Activated CD4-positive, alpha-beta T cell treated with anti-CD3 and anti-CD28 coated beads for 36 hours (primary cell): ENCODE measurements at regions of chrX and their contacts with region 1.

Region 1: GRCh38 chrX:136268051-136269048 is 17.1 kb upstream of the MAP7D3 start:
- DNase-seq: peak; percentile 59
- ATAC-seq: peak; percentile 68
- H3K4me3 Mint-ChIP-seq: no peak overlapping the region
- H3K27ac Mint-ChIP-seq: no peak overlapping the region
- H3K4me1 Mint-ChIP-seq: peaks cover 4% of the 10 kb centered on the region
- H3K27me3 Mint-ChIP-seq: no peaks in the 10 kb centered on the region

Region 2: GRCh38 chrX:136115126-136115903 is 153.0 kb before region 1 on chrX:
- CTCF ChIA-PET with region 1: no interaction called
- POLR2A ChIA-PET with region 1: no interaction called
- intact Hi-C with region 1: no loop called
- DNase-seq: no peak
- ATAC-seq: no peak
- H3K4me3 Mint-ChIP-seq: no peak overlapping the region
- H3K27ac Mint-ChIP-seq: no peak overlapping the region
- H3K4me1 Mint-ChIP-seq: no peaks in the 10 kb centered on the region
- H3K27me3 Mint-ChIP-seq: no peaks in the 10 kb centered on the region

Region 3: DNA sequence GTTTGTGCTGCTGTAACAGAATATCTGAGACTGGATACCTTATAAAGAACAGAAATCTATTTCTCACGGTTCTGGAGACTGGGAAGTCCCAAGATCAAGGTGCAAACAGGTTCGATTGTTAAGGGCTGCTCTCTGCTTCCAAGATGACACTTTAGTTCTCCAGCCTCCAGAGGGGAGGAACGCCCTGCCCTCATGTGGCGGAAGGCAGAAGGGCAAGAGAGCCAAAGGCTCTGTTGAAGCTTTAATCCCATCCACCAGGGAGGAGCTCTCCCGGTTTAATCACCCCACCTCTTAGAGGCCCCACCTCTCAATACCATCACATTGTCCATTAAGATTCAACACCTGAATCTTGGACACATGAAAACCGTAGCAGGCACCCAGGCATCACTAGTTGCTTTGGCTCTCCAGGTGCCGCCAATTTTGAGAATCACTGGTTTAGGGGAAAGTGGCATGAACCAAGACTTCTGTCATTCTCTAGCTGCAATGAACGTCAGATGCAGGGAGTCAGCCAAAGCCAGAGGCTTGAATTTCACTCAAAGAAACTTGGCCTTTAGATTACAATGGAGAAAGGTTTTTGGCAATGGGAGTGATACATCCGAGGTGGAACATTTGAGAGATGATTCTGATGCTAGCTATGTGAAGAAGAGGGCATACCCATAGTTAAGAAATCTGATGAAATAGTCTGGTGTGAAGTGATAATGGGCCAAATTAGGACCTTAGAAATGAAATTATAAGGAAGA is 105.3 kb before region 1 on chrX:
- CTCF ChIA-PET with region 1: interaction called, 14 read pairs
- POLR2A ChIA-PET with region 1: no interaction called
- intact Hi-C with region 1: loop called in 1 of 2 experiments (anchors 1 kb)
- DNase-seq: peak; percentile 71
- ATAC-seq: peak; percentile 84
- H3K4me3 Mint-ChIP-seq: no peak overlapping the region
- H3K27ac Mint-ChIP-seq: no peak overlapping the region
- H3K4me1 Mint-ChIP-seq: no peaks in the 10 kb centered on the region
- H3K27me3 Mint-ChIP-seq: no peaks in the 10 kb centered on the region

Region 4: GRCh38 chrX:136192839-136193414 is 75.4 kb before region 1 on chrX:
- CTCF ChIA-PET with region 1: no interaction called
- POLR2A ChIA-PET with region 1: no interaction called
- intact Hi-C with region 1: no loop called
- DNase-seq: no peak
- ATAC-seq: no peak
- H3K4me3 Mint-ChIP-seq: no peak overlapping the region
- H3K27ac Mint-ChIP-seq: no peak overlapping the region
- H3K4me1 Mint-ChIP-seq: peaks cover 32% of the 10 kb centered on the region
- H3K27me3 Mint-ChIP-seq: no peaks in the 10 kb centered on the region

Region 5: GRCh38 chrX:136797787-136798186 is 529.4 kb after region 1 on chrX:
- CTCF ChIA-PET with region 1: no interaction called
- POLR2A ChIA-PET with region 1: no interaction called
- intact Hi-C with region 1: no loop called
- DNase-seq: no peak
- ATAC-seq: no peak
- H3K4me3 Mint-ChIP-seq: no peak overlapping the region
- H3K27ac Mint-ChIP-seq: no peak overlapping the region
- H3K4me1 Mint-ChIP-seq: peaks cover 10% of the 10 kb centered on the region
- H3K27me3 Mint-ChIP-seq: no peaks in the 10 kb centered on the region

Region 6: GRCh38 chrX:137195991-137196390 is 927.6 kb after region 1 on chrX:
- CTCF ChIA-PET with region 1: no interaction called
- POLR2A ChIA-PET with region 1: no interaction called
- intact Hi-C with region 1: no loop called
- DNase-seq: no peak
- ATAC-seq: no peak
- H3K4me3 Mint-ChIP-seq: no peak overlapping the region
- H3K27ac Mint-ChIP-seq: no peak overlapping the region
- H3K4me1 Mint-ChIP-seq: peaks cover 7% of the 10 kb centered on the region
- H3K27me3 Mint-ChIP-seq: peaks cover 2% of the 10 kb centered on the region